ENCODE measurements at regions of chr5 and their contacts with region 1.

Region 1: GRCh38 chr5:53089345-53089991 is 20.1 kb downstream of the MOCS2 start:
- DNase-seq: no peak
- H3K4me3 Mint-ChIP-seq: peak overlapping the region; percentile 59
- H3K27ac Mint-ChIP-seq: peak overlapping the region; percentile 65
- H3K4me1 Mint-ChIP-seq: peaks cover 51% of the 10 kb centered on the region
- H3K27me3 Mint-ChIP-seq: peaks cover 2% of the 10 kb centered on the region

Region 2: GRCh38 chr5:52989781-52990527 is 99.5 kb before region 1 on chr5:
- intact Hi-C with region 1: loop called (anchors 1 kb)
- DNase-seq: peak; percentile 26
- H3K4me3 Mint-ChIP-seq: peak overlapping the region; percentile 75
- H3K27ac Mint-ChIP-seq: no peak overlapping the region
- H3K4me1 Mint-ChIP-seq: peaks cover 29% of the 10 kb centered on the region
- H3K27me3 Mint-ChIP-seq: peaks cover 40% of the 10 kb centered on the region

Region 3: GRCh38 chr5:53031695-53032096 is 57.8 kb before region 1 on chr5:
- intact Hi-C with region 1: loop called (anchors 1 kb)
- DNase-seq: peak; percentile 50
- H3K4me3 Mint-ChIP-seq: no peak overlapping the region
- H3K27ac Mint-ChIP-seq: peak overlapping the region; percentile 56
- H3K4me1 Mint-ChIP-seq: peaks cover 57% of the 10 kb centered on the region
- H3K27me3 Mint-ChIP-seq: peaks cover 6% of the 10 kb centered on the region

Region 4: GRCh38 chr5:53041071-53041692 is 48.3 kb before region 1 on chr5:
- intact Hi-C with region 1: loop called (anchors 1 kb)
- DNase-seq: peak; percentile 36
- H3K4me3 Mint-ChIP-seq: peak overlapping the region; percentile 15
- H3K27ac Mint-ChIP-seq: peak overlapping the region; percentile 24
- H3K4me1 Mint-ChIP-seq: peaks cover 73% of the 10 kb centered on the region
- H3K27me3 Mint-ChIP-seq: no peaks in the 10 kb centered on the region

Region 5: DNA sequence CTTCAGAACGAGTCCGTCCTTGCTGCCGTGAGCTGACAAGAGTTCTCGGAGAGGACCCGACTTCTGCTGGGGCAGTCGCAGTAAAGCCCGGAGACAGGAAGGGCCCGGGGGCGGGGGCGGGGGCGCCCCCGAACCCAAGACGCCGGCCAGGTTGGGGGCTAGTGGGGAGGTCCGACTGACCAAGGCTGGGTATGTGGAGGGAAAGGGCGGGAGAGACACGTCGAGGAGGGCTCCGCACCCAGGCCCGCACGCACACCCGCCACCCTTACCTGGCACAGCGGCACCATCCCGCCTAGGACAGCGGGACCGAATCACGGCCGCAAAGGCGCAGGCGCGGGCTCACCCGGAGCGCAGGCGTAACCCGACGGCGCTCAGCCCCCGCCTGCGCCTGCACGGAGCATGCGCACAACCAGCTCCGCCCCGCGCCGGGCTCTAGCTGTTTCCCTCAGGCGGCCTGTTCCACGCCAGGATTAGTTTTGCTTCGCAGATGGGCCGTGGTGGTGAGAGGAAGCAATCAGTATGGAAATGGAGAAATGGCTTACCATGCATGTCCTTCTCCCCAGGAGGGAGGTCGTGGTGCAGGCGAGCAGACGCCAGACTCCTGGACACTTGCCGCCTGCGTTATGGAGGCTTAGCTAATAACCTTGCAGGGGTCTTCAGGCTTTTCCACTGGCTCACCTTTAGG is 20.1 kb after region 1 on chr5 and contains the start of gene MOCS2:
- intact Hi-C with region 1: loop called (anchors 2 kb)
- DNase-seq: peak; percentile 88
- H3K4me3 Mint-ChIP-seq: peak within 1 kb of the TSS; percentile 92
- H3K27ac Mint-ChIP-seq: peak within 1 kb of the TSS; percentile 84
- H3K4me1 Mint-ChIP-seq: peaks cover 42% of the 10 kb centered on the region
- H3K27me3 Mint-ChIP-seq: no peaks in the 10 kb centered on the region
- total RNA-seq, gene MOCS2: 14.7 and 15.4 TPM in 2 replicates